ENCODE measurements at regions of chr11 and their contacts with region 1.

Region 1: GRCh38 chr11:119323538-119324033 is 6.7 kb upstream of the MCAM start:
- DNase-seq: peak; percentile 70
- H3K4me3 ChIP-seq: no peak overlapping the region
- H3K27ac ChIP-seq: no peak overlapping the region
- H3K4me1 ChIP-seq: peaks cover 40% of the 10 kb centered on the region
- CTCF ChIP-seq: peak; percentile 94

Region 2: GRCh38 chr11:119067371-119068222 is 256.0 kb before region 1 on chr11 and contains the start of gene VPS11:
- CTCF ChIA-PET with region 1: no interaction called
- POLR2A ChIA-PET with region 1: no interaction called
- intact Hi-C with region 1: loop called (anchors 5 kb)
- DNase-seq: peak; percentile 98
- H3K4me3 ChIP-seq: peak within 1 kb of the TSS; percentile 83
- H3K27ac ChIP-seq: peak within 1 kb of the TSS; percentile 75
- H3K4me1 ChIP-seq: peaks cover 23% of the 10 kb centered on the region
- CTCF ChIP-seq: no peak
- total RNA-seq, gene VPS11: 32.2 and 46.1 TPM in 2 replicates

Region 3: GRCh38 chr11:119101759-119102423 is 221.7 kb before region 1 on chr11 and contains the start of gene DPAGT1:
- CTCF ChIA-PET with region 1: interaction called, 7 read pairs
- POLR2A ChIA-PET with region 1: interaction called, 4 read pairs
- intact Hi-C with region 1: loop called (anchors 5 kb)
- DNase-seq: peak; percentile 93
- H3K4me3 ChIP-seq: peak within 1 kb of the TSS; percentile 88
- H3K27ac ChIP-seq: peak within 1 kb of the TSS; percentile 86
- H3K4me1 ChIP-seq: peaks cover 49% of the 10 kb centered on the region
- CTCF ChIP-seq: no peak
- total RNA-seq, gene DPAGT1: 31.7 and 35.8 TPM in 2 replicates

Region 4: DNA sequence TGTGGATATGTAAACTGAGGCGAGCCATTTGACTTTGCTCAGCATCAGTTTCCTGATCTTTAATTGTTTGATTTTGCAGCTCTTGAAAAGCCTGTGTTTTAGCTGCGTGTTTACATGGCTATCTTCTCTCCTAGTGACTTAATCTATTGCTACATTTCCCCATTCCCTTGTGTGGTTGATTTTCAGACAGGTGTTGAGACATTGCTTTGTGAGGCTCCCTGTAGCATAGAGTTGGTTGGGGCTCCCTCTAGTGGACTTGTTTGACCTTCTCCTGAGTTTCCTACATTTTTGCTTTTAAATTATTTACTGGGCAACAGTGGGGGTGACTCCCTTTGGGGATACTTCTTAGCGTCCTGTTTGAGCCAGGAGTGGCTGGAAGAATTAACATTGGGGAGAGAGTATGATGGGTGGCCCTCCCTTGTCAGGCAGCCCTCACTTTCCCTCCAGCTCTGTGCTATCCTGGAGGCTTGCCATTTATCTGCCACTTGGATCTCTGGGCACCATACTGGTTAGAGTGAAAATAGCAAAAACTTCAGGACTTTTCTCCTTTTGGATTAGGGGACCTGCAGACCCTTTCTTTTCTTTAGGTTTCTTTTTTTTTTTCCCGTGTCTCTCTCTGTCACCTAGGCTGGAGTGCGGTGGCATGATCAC is 126.6 kb before region 1 on chr11:
- CTCF ChIA-PET with region 1: interaction called, 4 read pairs
- POLR2A ChIA-PET with region 1: interaction called, 3 read pairs
- intact Hi-C with region 1: loop called (anchors 2 kb)
- DNase-seq: peak; percentile 89
- H3K4me3 ChIP-seq: no peak overlapping the region
- H3K27ac ChIP-seq: no peak overlapping the region
- H3K4me1 ChIP-seq: peaks cover 3% of the 10 kb centered on the region
- CTCF ChIP-seq: peak; percentile 96

Region 5: GRCh38 chr11:119205574-119206510 is 117.7 kb before region 1 on chr11 and contains the start of gene CBL:
- CTCF ChIA-PET with region 1: no interaction called
- POLR2A ChIA-PET with region 1: no interaction called
- intact Hi-C with region 1: loop called (anchors 1 kb)
- DNase-seq: peak; percentile 92
- H3K4me3 ChIP-seq: peak within 1 kb of the TSS; percentile 100
- H3K27ac ChIP-seq: peak within 1 kb of the TSS; percentile 78
- H3K4me1 ChIP-seq: peaks cover 31% of the 10 kb centered on the region
- CTCF ChIP-seq: peak; percentile 89
- total RNA-seq, gene CBL: 19.1 and 19.2 TPM in 2 replicates

Region 6: GRCh38 chr11:119338318-119338907 is 14.8 kb after region 1 on chr11:
- CTCF ChIA-PET with region 1: interaction called, 16 read pairs
- POLR2A ChIA-PET with region 1: interaction called, 3 read pairs
- intact Hi-C with region 1: no loop called
- DNase-seq: peak; percentile 79
- H3K4me3 ChIP-seq: peak overlapping the region; percentile 10
- H3K27ac ChIP-seq: no peak overlapping the region
- H3K4me1 ChIP-seq: peaks cover 48% of the 10 kb centered on the region
- CTCF ChIP-seq: peak; percentile 95

Region 7: DNA sequence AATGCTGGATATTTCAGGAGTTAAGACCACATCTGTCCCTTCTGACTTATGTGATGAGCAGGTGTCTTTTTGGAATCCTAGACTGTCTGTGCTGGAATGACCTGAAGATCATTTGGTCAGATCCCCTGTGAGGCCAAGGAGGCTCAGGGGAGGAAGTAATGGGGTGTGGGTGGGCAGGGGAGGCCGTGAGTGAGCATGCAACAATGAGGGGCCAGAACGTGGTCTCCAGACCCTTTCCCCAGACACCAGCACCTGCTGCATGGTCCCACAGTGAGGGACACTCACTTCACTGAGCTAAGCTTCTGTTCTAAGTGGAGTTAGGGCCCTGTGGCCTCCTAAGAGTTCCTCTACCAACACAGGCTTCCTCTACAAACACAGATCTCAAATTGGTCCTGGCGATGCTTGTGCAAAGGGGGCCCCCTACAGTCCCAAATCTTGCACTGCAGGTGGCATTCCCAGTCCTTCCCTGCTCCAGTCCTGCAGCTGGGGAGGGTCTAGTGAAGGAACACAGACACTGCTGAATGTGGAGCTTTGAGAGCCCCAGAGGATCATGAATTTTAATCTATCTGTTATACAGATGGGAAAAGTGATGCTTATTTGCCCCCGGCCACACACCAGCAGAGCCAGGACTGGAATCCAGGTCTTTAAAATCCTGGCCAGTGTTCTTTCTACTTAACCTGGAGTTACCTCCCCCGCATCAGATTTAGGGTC is 50.5 kb after region 1 on chr11:
- CTCF ChIA-PET with region 1: interaction called, 3 read pairs
- POLR2A ChIA-PET with region 1: interaction called, 3 read pairs
- intact Hi-C with region 1: loop called (anchors 5 kb)
- DNase-seq: peak; percentile 75
- H3K4me3 ChIP-seq: no peak overlapping the region
- H3K27ac ChIP-seq: peak overlapping the region; percentile 47
- H3K4me1 ChIP-seq: peaks cover 72% of the 10 kb centered on the region
- CTCF ChIP-seq: peak; percentile 98